ENCODE measurements at regions of chr4 and their contacts with region 1.

Region 1: GRCh38 chr4:153488006-153488891 is 22.1 kb downstream of the TMEM131L start:
- DNase-seq: peak; percentile 52 to 62
- ATAC-seq: peak; percentile 45 to 72 (median 58)
- H3K4me3 ChIP-seq: peak overlapping the region in 7 of 10 donors; percentile 14 to 44 (median 28)
- H3K27ac ChIP-seq: peak overlapping the region; percentile 53 to 90 (median 81)
- H3K4me1 ChIP-seq: peaks cover 16 to 78% (median 59%) of the 10 kb centered on the region in 9 donors
- H3K27me3 ChIP-seq: no peaks in the 10 kb centered on the region
- CTCF ChIP-seq: no peak

Region 2: GRCh38 chr4:153426207-153426885 is 61.9 kb before region 1 on chr4:
- intact Hi-C with region 1: no loop called
- DNase-seq: no peak
- ATAC-seq: no peak
- H3K4me3 ChIP-seq: no peak overlapping the region
- H3K27ac ChIP-seq: peak overlapping the region in 1 of 10 donors; percentile 29
- H3K4me1 ChIP-seq: peaks cover 0 to 3% (median 0%) of the 10 kb centered on the region in 9 donors
- H3K27me3 ChIP-seq: no peaks in the 10 kb centered on the region
- CTCF ChIP-seq: no peak

Region 3: GRCh38 chr4:153518637-153519389 is 30.6 kb after region 1 on chr4:
- intact Hi-C with region 1: loop called in 1 of 10 experiments (anchors 5 kb)
- DNase-seq: no peak
- ATAC-seq: peak in 7 of 8 donors; percentile 21 to 62 (median 47)
- H3K4me3 ChIP-seq: peak overlapping the region in 6 of 10 donors; percentile 2 to 23 (median 8)
- H3K27ac ChIP-seq: peak overlapping the region in 9 of 10 donors; percentile 15 to 69 (median 40)
- H3K4me1 ChIP-seq: peaks cover 6 to 81% (median 48%) of the 10 kb centered on the region in 9 donors
- H3K27me3 ChIP-seq: no peaks in the 10 kb centered on the region
- CTCF ChIP-seq: no peak

Region 4: DNA sequence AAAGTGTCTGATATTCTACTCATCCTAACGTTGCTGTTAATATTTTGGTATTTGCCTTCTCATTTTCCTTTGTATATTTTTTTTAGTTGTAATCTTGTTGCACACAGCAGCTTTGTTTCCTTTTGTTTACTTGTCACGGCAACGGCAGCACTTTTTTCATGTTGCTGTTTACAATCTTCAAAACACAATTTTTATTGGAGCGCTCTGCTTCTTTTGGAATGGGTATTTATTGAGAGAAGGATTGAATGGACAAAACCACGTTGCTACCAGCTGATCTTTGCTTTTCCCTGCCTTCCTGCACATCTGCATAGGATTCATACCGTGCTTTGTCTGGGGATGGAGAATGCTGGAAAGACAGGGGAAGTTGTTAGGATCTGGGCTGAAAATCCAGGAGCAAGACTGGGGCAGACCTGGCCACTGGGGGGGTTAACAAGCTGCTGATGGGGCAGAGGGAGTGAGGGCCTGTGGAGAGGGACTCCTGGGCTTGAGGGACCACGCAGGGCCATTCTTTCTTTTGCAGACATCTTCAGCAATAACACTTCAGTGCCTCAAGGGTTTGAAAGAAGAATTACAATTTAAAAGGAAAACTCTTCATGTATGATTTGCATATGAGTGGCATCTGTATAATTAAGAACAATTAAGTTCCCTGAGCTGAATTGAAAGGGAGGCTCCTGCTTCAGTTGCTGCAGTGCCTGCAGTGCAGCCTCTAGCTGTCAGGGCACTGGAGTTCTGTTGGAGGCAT is 47.7 kb after region 1 on chr4:
- intact Hi-C with region 1: loop called in 4 of 10 experiments (anchors 5 to 10 kb)
- DNase-seq: no peak
- ATAC-seq: peak in 1 of 8 donors; percentile 8
- H3K4me3 ChIP-seq: no peak overlapping the region
- H3K27ac ChIP-seq: no peak overlapping the region
- H3K4me1 ChIP-seq: peaks cover 6 to 95% (median 62%) of the 10 kb centered on the region in 9 donors
- H3K27me3 ChIP-seq: no peaks in the 10 kb centered on the region
- CTCF ChIP-seq: no peak

Region 5: DNA sequence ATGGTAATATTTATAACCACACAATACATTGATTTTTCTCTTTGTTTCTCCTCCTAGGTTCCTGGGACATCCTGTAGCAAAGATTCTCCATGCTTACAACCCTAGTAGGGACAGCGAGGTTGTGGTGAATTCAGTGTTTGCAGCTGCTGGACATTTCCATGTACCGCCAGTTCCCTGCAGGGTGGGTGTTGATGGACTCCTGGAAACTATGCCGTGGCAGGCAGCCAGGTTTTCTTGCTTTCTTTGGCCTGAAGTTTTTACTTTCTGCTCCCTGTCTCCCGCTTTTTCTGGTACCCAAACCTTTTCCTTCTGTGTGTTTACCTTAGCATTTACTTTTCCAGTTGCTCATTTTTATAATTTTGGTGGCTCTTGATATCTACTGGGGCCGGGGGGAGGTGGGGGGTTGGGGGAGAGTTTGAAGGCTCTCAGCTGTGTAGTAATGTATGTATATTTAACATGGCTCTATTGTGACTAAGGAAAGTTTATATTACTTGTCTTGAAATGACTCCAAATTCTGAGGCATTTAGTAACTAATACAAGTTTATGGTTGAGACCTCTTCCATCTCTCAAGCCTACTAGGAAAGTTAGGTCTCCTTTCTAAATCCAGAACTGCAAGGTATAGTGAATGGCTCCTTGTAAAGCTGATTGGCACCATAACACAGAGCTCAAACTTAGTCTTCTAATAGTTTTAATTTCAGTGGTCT is 67.6 kb after region 1 on chr4:
- intact Hi-C with region 1: loop called in 2 of 10 experiments (anchors 5 to 10 kb)
- DNase-seq: peak; percentile 82 to 89
- ATAC-seq: peak; percentile 74 to 95 (median 90)
- H3K4me3 ChIP-seq: peak overlapping the region in 5 of 10 donors; percentile 15 to 31 (median 25)
- H3K27ac ChIP-seq: peak overlapping the region in 9 of 10 donors; percentile 18 to 86 (median 78)
- H3K4me1 ChIP-seq: peaks cover 0 to 35% (median 11%) of the 10 kb centered on the region in 9 donors
- H3K27me3 ChIP-seq: no peaks in the 10 kb centered on the region
- CTCF ChIP-seq: no peak

Region 6: GRCh38 chr4:153564630-153565525 is 76.6 kb after region 1 on chr4:
- intact Hi-C with region 1: loop called in 2 of 10 experiments (anchors 5 to 10 kb)
- DNase-seq: no peak
- ATAC-seq: peak in 7 of 8 donors; percentile 70 to 86 (median 75)
- H3K4me3 ChIP-seq: no peak overlapping the region
- H3K27ac ChIP-seq: peak overlapping the region; percentile 1 to 80 (median 68)
- H3K4me1 ChIP-seq: peaks cover 12 to 50% (median 29%) of the 10 kb centered on the region in 9 donors
- H3K27me3 ChIP-seq: no peaks in the 10 kb centered on the region
- CTCF ChIP-seq: no peak